Pancreas (tissue), 10 donors: ENCODE measurements at regions of chr3 and their contacts with region 1.

Region 1: DNA sequence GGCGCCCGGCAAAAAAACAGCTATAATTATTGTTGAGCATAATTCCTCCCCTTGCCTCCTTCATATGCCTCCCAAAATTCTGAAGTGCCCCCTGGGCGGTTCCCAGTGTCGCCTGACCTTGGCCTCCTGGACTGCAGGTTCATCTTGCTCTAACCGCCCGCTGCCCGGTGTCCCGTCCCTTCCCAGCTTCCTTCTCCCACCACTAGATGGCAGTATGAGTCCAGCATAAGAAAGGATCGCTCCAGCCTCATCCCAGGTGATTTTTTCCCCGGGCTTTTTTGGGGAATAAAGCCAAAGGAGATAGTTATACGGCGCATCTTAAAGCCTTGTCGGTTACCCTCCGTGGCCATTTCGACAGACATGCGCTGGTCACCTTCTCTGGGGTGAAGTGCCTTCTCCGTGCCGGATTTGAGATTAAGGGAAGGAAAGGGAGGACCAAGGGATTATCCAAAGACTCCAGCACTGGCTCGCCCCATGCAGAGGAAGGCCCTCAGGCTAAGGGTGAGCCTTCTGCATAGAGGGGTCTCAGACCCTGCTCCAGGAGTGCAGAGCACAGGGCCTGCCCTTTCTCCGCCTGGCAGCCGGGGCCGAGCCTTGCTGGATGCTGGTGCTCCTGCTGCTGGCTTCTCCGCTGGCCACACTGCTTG is 45.8 kb upstream of the TRA2B start:
- DNase-seq: peak; percentile 54 to 86 (median 71)
- ATAC-seq: peak; percentile 93 to 99 (median 98)
- H3K4me3 ChIP-seq: no peak overlapping the region
- H3K27ac ChIP-seq: no peak overlapping the region
- H3K4me1 ChIP-seq: no peaks in the 10 kb centered on the region
- H3K27me3 ChIP-seq: no peaks in the 10 kb centered on the region
- CTCF ChIP-seq: peak; percentile 84 to 93 (median 88)

Region 2: GRCh38 chr3:185912929-185913901 is 70.4 kb before region 1 on chr3:
- intact Hi-C with region 1: no loop called
- DNase-seq: no peak
- ATAC-seq: peak in 3 of 4 donors; percentile 14 to 18 (median 17)
- H3K4me3 ChIP-seq: no peak overlapping the region
- H3K27ac ChIP-seq: no peak overlapping the region
- H3K4me1 ChIP-seq: no peaks in the 10 kb centered on the region
- H3K27me3 ChIP-seq: no peaks in the 10 kb centered on the region
- CTCF ChIP-seq: no peak

Region 3: DNA sequence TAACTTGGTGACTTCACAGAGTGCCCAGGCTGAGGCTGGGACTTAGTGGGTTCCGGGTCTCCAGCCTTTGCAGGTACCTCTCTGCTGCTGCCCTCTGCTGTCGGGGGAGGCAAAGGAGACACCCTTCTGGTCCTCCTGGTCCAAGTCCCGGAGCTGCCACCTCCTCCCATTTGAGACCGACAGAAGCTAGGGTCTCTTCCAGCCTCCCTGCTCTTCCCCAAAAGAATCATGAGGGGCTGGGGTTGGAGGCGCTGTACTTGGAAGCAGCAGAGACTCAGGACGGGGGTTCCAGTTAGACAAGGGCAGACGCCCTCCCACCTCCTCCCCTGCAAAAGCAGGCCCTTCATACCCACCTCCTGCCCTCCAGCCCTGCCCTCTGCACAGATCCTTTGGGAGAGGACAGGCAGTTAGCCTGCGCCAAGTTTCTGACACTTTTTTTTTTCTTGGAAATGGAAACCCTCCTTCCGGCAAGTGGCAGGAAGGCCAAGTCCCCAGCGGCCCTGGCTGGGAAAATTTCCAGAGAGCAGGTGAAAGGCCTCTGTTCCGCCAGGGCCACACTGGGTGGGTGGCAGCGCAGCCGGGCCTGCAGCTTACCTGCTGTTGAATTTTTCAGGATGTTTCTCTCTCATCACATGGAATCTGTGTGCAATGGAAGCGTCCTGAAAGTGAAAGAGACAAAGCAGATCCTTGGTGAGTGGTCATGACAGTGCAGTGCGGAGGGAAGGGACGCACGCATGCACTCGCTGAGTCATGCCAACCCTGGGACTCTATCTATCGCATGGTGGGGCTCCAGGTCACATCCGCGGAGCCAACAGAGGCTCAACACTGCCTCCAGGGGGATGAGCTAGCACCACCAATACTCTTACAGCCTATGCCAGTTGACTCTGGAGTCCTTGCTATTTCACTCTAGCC is 258.5 kb after region 1 on chr3:
- intact Hi-C with region 1: loop called in 2 of 3 experiments (anchors 5 kb)
- DNase-seq: peak; percentile 60 to 84 (median 78)
- ATAC-seq: peak; percentile 85 to 96 (median 92)
- H3K4me3 ChIP-seq: peak overlapping the region in 3 of 4 donors; percentile 3 to 35 (median 15)
- H3K27ac ChIP-seq: peak overlapping the region in 3 of 4 donors; percentile 35 to 57 (median 56)
- H3K4me1 ChIP-seq: no peaks in the 10 kb centered on the region
- H3K27me3 ChIP-seq: no peaks in the 10 kb centered on the region
- CTCF ChIP-seq: peak in 3 of 4 donors; percentile 22 to 35 (median 34)

Region 4: GRCh38 chr3:186259612-186260383 is 276.2 kb after region 1 on chr3:
- intact Hi-C with region 1: no loop called
- DNase-seq: peak; percentile 56 to 93 (median 81)
- ATAC-seq: peak; percentile 95 to 100 (median 98)
- H3K4me3 ChIP-seq: no peak overlapping the region
- H3K27ac ChIP-seq: no peak overlapping the region
- H3K4me1 ChIP-seq: peaks cover 0 to 4% (median 0%) of the 10 kb centered on the region in 3 donors
- H3K27me3 ChIP-seq: no peaks in the 10 kb centered on the region
- CTCF ChIP-seq: peak; percentile 62 to 89 (median 86)

Region 5: DNA sequence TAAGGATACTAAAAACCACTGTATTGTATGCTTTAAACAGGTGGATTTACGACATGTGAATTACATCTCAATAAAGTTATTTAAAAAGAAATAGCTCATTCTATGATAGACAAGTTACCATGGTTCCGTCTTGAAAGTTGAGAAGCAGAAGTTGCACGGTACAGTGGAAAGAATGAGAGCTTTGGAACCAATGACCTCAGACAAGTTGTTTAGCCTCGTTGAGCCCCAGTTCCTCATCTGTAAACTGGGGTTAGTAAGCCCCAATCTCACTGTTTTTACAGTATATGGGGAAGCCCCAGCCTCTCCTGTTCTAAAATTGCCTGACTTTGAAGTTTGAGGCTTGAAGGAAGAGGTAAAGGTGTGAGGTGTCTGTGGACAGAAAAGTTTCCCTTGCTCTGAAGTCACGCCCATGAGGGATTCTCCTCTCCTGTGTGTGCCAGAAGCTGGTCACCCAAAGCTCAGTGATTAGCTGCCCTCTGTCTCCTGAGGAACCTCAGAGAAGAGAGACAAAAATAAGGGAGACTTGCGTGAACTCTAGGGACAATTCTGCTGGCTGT is 550.6 kb after region 1 on chr3:
- intact Hi-C with region 1: loop called in 1 of 3 experiments (anchors 10 kb)
- DNase-seq: no peak
- ATAC-seq: peak in 2 of 4 donors; percentile 56 to 67
- H3K4me3 ChIP-seq: no peak overlapping the region
- H3K27ac ChIP-seq: no peak overlapping the region
- H3K4me1 ChIP-seq: peaks cover 0 to 4% (median 0%) of the 10 kb centered on the region in 3 donors
- H3K27me3 ChIP-seq: no peaks in the 10 kb centered on the region
- CTCF ChIP-seq: no peak